Dendritic cell treated with granulocyte-macrophage colony-stimulating factor and Interleukin-4, amounts not matched to agents 40 ng/mL and 50 ng/mL, for 4 days (primary cell): ENCODE measurements at regions of chr11 and their contacts with region 1.

Region 1: DNA sequence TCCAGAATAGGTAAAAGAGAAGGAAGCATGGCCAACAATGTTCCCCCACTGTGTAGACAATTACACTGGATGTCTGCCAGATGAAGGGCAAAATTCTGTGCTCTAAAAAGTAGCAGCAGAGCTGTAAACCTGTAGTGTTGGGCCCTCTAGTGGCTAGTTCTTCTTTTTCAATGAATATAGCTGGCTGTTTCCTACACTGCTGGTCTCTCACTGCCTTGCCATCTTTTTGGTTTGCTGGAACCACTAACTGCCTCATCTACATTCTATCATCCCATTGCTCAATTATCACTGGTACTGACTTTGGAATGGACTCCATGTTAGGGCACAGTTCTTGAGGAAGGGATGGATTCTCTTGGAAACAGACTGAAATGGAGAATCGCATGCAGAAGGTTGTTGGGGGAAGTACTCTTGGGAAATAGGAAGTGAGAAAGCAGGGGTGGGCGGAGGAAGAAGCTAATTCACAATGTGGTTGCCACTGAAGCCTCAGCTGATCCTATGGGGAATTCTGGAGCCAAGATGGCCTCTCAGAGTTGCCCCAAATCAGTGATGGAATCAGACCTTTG is 17.9 kb downstream of the KCNE3 start:
- H3K4me3 Mint-ChIP-seq: no peak overlapping the region
- H3K27ac Mint-ChIP-seq: peak overlapping the region; percentile 63
- H3K4me1 Mint-ChIP-seq: peaks cover 46% of the 10 kb centered on the region
- H3K27me3 Mint-ChIP-seq: no peaks in the 10 kb centered on the region

Region 2: DNA sequence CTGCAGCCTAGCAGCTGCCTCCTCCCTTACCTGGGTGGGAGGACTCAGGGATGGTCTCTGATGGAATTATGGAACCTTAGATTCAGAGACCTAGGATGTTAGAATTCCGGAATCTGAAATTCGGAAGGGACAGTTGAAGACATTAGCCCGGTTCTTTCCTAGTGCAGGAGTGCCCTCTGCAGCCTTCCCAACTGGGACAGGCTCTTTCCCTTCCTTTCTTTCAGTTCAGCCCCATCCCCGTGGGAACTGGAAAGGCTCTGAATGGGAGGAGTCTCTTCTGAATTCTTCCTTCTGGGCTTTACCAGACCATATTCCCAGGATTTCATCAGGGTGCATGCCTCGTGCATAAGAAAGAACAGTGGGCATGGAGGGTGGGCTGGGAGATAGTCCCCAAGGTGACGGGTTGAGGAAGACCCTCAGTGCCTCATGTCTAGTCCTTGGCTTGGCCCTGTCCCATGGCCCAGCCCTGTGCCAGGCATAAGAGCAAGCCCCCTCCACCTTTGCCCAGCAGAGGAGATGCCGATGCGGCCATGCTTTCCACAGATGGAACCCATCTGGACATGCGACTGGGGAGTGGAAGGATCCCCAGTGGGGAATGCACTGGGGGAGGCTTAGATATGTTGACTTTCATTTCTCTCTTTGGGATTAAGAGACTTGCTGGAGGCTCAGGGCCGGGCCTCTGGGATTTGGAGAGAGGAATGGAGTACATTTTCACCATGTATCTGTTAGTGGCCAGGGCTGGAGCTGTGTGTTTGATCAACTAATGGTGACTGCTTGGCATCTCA is 484.2 kb before region 1 on chr11:
- intact Hi-C with region 1: loop called (anchors 10 kb)
- H3K4me3 Mint-ChIP-seq: no peak overlapping the region
- H3K27ac Mint-ChIP-seq: no peak overlapping the region
- H3K4me1 Mint-ChIP-seq: peaks cover 22% of the 10 kb centered on the region
- H3K27me3 Mint-ChIP-seq: peaks cover 18% of the 10 kb centered on the region

Region 3: GRCh38 chr11:74255741-74256369 is 193.6 kb before region 1 on chr11:
- intact Hi-C with region 1: loop called (anchors 1 kb)
- H3K4me3 Mint-ChIP-seq: no peak overlapping the region
- H3K27ac Mint-ChIP-seq: no peak overlapping the region
- H3K4me1 Mint-ChIP-seq: peaks cover 6% of the 10 kb centered on the region
- H3K27me3 Mint-ChIP-seq: peaks cover under 1% of the 10 kb centered on the region

Region 4: DNA sequence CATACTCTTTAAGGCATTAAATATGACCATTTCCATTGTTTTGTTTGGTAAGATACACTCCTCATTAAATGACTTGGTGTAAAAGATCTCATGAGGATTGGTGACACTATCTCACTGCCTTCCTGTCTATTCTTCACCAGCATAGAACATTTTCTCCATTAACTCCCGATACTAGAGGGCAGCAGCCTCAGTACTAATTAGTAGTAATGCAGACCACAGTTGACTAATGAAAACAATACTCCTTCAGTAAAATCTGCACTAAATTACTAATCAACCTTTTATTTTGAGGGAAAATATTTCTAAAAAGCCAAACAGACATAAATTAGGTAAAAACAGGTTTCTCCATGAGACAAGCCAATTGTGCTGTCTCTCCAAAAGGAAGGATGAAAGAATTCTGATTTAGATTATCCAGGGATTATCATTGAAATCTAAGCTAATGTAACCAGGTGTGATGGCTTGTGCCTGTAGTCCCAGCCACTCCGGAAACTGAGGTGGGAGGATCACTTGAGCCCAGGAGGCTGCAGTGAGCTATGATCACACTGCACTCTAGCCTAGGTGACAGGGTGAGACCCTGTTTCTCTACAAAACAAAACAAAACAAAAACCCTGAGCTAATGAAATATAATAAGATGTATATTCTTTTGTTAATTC is 60.6 kb before region 1 on chr11:
- intact Hi-C with region 1: loop called (anchors 1 kb)
- H3K4me3 Mint-ChIP-seq: no peak overlapping the region
- H3K27ac Mint-ChIP-seq: no peak overlapping the region
- H3K4me1 Mint-ChIP-seq: peaks cover 16% of the 10 kb centered on the region
- H3K27me3 Mint-ChIP-seq: no peaks in the 10 kb centered on the region

Region 5: GRCh38 chr11:74492974-74493790 is 43.7 kb after region 1 on chr11 and contains the start of gene LIPT2:
- intact Hi-C with region 1: loop called (anchors 1 kb)
- H3K4me3 Mint-ChIP-seq: peak within 1 kb of the TSS; percentile 75
- H3K27ac Mint-ChIP-seq: peak within 1 kb of the TSS; percentile 83
- H3K4me1 Mint-ChIP-seq: peaks cover 13% of the 10 kb centered on the region
- H3K27me3 Mint-ChIP-seq: no peaks in the 10 kb centered on the region

Region 6: DNA sequence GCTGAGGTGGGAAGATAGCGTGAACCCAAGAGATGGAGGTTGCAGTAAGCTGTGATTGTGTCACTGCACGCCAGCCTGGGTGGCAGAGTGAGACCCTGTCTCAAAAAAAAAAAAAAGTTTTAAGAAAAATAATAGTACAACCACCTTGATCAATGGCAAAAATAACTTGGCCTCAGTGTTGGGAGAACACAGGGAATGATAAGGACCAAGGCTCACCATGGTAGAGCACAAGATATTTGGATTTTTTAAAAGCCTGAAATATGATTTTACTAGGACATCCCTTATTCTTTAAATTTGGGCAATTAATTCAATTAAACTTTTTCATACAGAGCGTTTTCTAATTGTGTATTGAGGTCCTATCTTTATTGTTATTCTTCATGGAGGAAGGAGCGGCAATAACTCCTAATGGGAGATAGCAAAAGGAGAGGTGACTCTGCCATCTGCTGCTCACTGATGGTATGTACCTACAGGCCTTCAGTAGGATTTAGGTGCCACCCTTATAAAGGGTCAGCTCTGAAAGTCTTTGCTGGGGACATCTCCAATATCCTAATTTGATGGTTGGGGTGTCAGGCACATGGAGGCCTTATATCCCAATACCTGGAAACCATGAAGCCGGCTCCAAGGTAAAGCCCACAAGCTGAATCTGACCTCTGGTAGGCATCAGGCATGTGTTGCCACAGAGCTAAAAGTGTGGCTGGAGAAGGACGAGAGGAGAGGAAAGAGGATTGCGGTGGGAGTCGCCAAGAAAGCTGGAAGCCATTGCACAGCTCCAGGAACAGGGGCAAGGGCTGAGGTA is 121.0 kb after region 1 on chr11:
- intact Hi-C with region 1: loop called (anchors 1 kb)
- H3K4me3 Mint-ChIP-seq: no peak overlapping the region
- H3K27ac Mint-ChIP-seq: no peak overlapping the region
- H3K4me1 Mint-ChIP-seq: no peaks in the 10 kb centered on the region
- H3K27me3 Mint-ChIP-seq: peaks cover 3% of the 10 kb centered on the region

Region 7: DNA sequence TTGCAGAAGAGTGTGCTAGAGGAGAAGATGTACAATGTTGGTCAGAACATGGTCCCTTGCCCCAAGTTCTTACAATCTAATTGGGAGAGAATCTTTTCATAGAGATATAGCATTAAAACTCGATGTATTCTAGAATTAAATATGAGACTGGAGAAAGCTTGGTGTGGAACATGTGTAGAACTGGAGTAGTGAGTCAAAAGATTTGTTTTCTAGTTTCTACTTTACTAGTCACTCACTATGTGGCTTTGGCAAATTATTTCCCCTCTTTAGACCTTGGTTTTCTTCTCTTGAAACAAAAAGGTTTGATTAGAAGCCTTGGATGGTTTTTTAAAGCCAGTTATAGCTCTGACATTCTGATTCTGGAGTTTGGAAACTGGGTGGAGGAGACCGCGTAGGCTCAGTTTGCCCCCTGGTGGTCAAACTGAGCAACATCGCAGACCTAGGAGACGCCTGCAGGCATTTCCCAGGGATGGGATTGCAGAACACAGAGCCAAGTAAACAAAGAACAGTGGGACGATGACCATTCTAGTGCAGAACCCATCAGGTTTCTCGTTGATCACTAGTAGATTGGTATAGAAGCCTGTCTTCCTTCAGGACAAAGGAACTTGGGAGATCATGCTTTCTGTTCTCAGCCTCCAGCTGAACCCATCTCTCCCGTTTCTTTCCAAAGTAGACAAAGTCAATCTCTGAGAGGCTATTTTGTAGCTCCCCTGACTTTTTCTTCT is 290.3 kb after region 1 on chr11:
- intact Hi-C with region 1: loop called (anchors 10 kb)
- H3K4me3 Mint-ChIP-seq: no peak overlapping the region
- H3K27ac Mint-ChIP-seq: no peak overlapping the region
- H3K4me1 Mint-ChIP-seq: peaks cover 38% of the 10 kb centered on the region
- H3K27me3 Mint-ChIP-seq: peaks cover 24% of the 10 kb centered on the region